ENCODE measurements at regions of chr12 and their contacts with region 1.

Region 1: GRCh38 chr12:62799126-62799736 is 135.7 kb downstream of the PPM1H start:
- DNase-seq: peak; percentile 81
- H3K4me3 ChIP-seq: no peak overlapping the region; a peak in 1 of 4 replicates
- H3K27ac ChIP-seq: no peak overlapping the region
- H3K4me1 ChIP-seq: peaks cover 0 to 3% of the 10 kb centered on the region in 2 experiments; a peak in 1 of 4 replicates
- H3K27me3 ChIP-seq: no peaks in the 10 kb centered on the region
- CTCF ChIP-seq: peak; percentile 98
- EP300 ChIP-seq: no peak
- RAD21 ChIP-seq: peak; percentile 93

Region 2: GRCh38 chr12:62785941-62786559 is 13.2 kb before region 1 on chr12:
- CTCF ChIA-PET with region 1: interaction called, 42 read pairs
- POLR2A ChIA-PET with region 1: interaction called, 3 read pairs
- DNase-seq: no peak
- H3K4me3 ChIP-seq: no peak overlapping the region
- H3K27ac ChIP-seq: peak overlapping the region; percentile 56 to 90
- H3K4me1 ChIP-seq: peaks cover 7 to 32% of the 10 kb centered on the region in 2 experiments; a peak in 3 of 4 replicates
- H3K27me3 ChIP-seq: no peaks in the 10 kb centered on the region
- CTCF ChIP-seq: no peak
- EP300 ChIP-seq: peak in 1 of 2 experiments; percentile 88
- RAD21 ChIP-seq: no peak

Region 3: DNA sequence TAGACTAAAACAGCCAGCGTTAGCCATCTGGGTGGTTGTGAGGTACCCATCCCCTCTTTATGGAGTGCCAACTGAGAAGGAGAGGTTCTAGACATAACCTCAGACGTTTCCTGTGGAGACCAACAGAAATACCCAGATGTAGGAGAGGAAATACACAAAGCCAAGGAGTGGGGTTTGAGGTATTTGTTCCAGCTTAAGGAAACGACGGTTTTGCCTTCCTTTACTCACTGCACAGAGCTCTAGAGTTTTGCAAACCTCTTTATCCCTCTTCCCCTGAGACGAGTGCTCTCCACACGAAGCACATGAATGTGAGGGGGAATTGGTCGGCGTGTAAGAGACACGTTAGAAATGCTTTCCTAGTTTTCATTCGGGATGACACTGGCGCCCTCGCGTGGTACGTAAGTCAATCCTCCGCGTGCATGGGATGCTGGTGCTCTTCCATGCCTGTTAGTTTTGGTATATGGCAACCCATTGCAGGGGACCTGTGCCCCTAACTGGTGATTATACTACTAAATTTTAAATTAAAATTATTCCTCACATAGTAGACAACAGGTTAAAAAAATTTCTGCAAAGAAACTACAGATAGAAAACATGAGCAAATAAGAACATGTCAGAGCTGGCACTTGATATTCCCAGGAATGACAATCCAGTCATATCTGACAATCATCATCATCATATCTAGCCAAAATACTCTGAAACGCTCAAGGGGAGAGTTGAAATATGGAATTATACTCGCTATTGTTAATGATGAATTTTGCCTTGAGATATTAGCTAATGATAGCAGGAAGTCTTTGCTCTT is 14.0 kb after region 1 on chr12:
- CTCF ChIA-PET with region 1: interaction called, 68 read pairs
- POLR2A ChIA-PET with region 1: no interaction called
- DNase-seq: peak; percentile 63
- H3K4me3 ChIP-seq: peak overlapping the region in 1 of 2 experiments; percentile 46; a peak in 2 of 4 replicates
- H3K27ac ChIP-seq: no peak overlapping the region
- H3K4me1 ChIP-seq: peaks cover 0 to 3% of the 10 kb centered on the region in 2 experiments; a peak in 2 of 4 replicates
- H3K27me3 ChIP-seq: peaks cover 9% of the 10 kb centered on the region; the same call in 1 of the 2 replicates
- CTCF ChIP-seq: peak; percentile 82
- EP300 ChIP-seq: no peak
- RAD21 ChIP-seq: peak; percentile 75

Region 4: GRCh38 chr12:62841846-62842245 is 42.6 kb after region 1 on chr12:
- CTCF ChIA-PET with region 1: no interaction called
- POLR2A ChIA-PET with region 1: no interaction called
- DNase-seq: no peak
- H3K4me3 ChIP-seq: no peak overlapping the region
- H3K27ac ChIP-seq: no peak overlapping the region
- H3K4me1 ChIP-seq: no peaks in the 10 kb centered on the region
- H3K27me3 ChIP-seq: no peaks in the 10 kb centered on the region
- CTCF ChIP-seq: no peak
- EP300 ChIP-seq: no peak
- RAD21 ChIP-seq: no peak

Region 5: DNA sequence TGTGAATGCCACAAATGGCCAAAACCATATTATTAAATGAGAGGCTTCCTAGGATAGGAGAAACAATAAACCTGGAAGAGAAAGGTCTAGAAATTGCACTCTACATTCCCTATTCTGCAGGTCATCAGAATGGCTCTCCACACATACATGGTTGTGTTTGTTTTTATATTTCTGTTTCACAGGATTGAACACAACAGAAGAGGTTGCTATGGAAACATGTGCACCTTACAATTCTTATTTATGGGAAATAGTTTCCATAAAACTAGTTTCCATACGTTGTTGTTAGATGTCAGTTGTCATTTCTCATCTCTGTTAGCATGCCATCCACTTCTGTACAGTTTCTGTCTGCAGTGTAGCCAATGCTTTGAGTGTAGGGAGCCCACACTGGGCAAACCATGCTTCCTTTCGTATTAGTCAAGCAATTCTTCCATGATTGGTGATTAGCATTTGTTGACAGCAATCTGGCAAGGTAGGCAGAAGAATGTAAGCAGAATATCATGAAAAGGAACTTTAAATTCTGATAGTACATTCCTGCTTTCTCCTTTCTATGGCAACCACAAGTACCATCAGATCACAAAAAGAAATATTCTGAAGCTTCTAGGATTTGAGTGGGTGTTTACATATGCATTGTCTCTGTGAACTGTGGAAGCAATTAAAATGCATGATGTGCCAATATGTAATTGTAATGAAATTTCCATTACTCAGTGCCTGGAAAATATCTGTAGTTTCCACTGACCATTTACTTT is 493.4 kb after region 1 on chr12:
- CTCF ChIA-PET with region 1: no interaction called
- POLR2A ChIA-PET with region 1: no interaction called
- DNase-seq: no peak
- H3K4me3 ChIP-seq: no peak overlapping the region
- H3K27ac ChIP-seq: no peak overlapping the region
- H3K4me1 ChIP-seq: no peaks in the 10 kb centered on the region
- H3K27me3 ChIP-seq: no peaks in the 10 kb centered on the region
- CTCF ChIP-seq: no peak
- EP300 ChIP-seq: no peak
- RAD21 ChIP-seq: no peak

Measured in SK-N-SH (cell line).